Activated CD4-positive, alpha-beta T cell treated with anti-CD3 and anti-CD28 coated beads for 36 hours (primary cell): ENCODE measurements at regions of chr15 and their contacts with region 1.

Region 1: GRCh38 chr15:30973379-30973778 is 18.0 kb downstream of the MTMR10 start:
- DNase-seq: no peak
- ATAC-seq: no peak
- H3K4me3 Mint-ChIP-seq: no peak overlapping the region
- H3K27ac Mint-ChIP-seq: no peak overlapping the region
- H3K4me1 Mint-ChIP-seq: peaks cover 13% of the 10 kb centered on the region
- H3K27me3 Mint-ChIP-seq: no peaks in the 10 kb centered on the region

Region 2: DNA sequence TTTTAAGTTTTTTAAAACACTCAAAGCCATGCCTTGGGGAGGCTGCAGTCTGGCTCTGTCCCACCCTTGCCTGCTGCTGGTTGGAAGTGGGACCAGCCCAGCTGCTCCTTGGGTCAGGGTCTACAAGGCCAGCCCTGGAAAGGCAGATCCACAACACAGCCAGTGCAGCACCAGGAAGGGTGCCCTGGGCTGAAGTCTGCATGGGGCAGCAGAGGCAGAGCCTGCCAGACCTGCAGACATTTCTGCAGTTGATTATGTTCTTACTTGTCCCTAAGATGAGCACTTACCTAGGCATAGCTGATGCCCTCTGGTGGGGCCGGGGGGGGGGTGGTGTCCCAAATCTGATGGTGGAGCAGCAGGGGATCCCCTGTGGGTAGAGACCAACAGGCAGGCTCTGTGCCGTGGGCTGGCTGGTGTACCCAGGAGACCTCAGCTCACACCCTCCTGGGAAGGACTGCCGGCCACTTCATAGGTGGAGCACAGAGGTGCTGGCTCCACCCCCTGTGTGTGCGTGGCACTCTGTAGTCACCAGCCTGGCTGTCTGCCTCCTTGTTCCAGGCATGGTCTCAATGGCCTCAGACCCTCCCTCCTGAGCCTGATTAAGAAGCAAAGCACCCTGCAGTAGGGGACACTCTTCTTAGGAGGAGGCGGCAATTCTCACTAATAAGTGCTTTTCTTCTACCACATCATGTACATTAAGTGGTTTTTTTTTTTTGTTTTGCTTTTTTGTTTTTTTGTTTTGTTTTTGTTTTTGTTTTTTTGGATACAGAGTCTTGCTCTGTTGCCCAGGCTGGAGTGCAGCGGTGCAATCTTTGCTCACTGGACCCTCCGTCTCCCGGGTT is 255.8 kb after region 1 on chr15:
- CTCF ChIA-PET with region 1: no interaction called
- POLR2A ChIA-PET with region 1: interaction called, 11 read pairs
- intact Hi-C with region 1: no loop called
- DNase-seq: no peak
- ATAC-seq: no peak
- H3K4me3 Mint-ChIP-seq: no peak overlapping the region
- H3K27ac Mint-ChIP-seq: no peak overlapping the region
- H3K4me1 Mint-ChIP-seq: peaks cover 4% of the 10 kb centered on the region
- H3K27me3 Mint-ChIP-seq: no peaks in the 10 kb centered on the region